Mammary epithelial cell (primary cell): ENCODE measurements at regions of chr5 and their contacts with region 1.

Region 1: DNA sequence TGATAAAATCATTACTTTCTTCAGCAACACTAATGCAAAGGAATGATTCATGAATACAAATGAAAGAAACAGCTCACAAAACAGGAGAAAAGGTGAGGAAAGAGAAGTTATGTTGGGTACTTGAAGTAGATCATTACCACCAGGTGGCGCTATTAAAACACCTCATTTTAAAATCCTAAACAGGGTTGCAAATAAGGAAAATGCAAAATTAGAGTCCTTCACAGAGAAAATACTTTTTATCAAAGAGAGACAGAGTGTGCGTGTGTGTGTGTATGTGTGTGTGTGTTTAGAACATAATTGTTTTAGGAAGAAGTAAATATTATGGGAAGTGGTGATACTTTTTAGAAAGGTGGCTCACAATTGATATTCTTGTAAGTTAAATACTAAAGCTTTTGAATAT is 49.5 kb upstream of the CD180 start:
- DNase-seq: peak; percentile 66
- H3K4me3 ChIP-seq: no peak overlapping the region
- H3K27ac ChIP-seq: peak overlapping the region; percentile 30
- H3K4me1 ChIP-seq: peaks cover 46% of the 10 kb centered on the region
- H3K27me3 ChIP-seq: no peaks in the 10 kb centered on the region
- CTCF ChIP-seq: peak; percentile 50 to 61

Region 2: DNA sequence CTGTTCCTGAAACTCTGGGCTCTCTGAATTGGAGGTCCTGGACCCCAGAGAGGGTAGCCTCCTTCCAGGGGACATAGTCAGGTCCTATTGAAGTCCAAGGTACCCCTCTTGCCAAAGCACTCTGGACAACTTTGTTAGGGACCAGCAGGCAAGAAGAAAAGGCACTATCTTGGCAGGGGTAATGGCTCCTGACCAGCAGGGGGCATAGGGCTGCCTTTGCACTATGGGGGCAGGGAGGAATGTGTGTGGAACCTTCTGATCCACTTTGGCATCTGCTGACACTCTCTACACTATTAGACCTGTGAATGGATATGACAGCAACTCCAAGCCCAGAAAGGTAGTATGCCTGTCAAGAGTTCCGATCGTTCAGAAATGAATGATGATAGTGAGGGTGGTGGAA is 129.5 kb after region 1 on chr5:
- CTCF ChIA-PET with region 1: no interaction called
- dilution Hi-C with region 1: no loop called
- in situ Hi-C with region 1: no loop called
- intact Hi-C with region 1: no loop called
- DNase-seq: no peak
- H3K4me3 ChIP-seq: no peak overlapping the region
- H3K27ac ChIP-seq: no peak overlapping the region
- H3K4me1 ChIP-seq: no peaks in the 10 kb centered on the region
- H3K27me3 ChIP-seq: no peaks in the 10 kb centered on the region
- CTCF ChIP-seq: peak in 1 of 2 donors; percentile 17

Region 3: GRCh38 chr5:67395790-67396418 is 149.8 kb after region 1 on chr5:
- CTCF ChIA-PET with region 1: interaction called, 3 read pairs
- dilution Hi-C with region 1: no loop called
- in situ Hi-C with region 1: no loop called
- intact Hi-C with region 1: loop called (anchors 1 kb)
- DNase-seq: no peak
- H3K4me3 ChIP-seq: no peak overlapping the region
- H3K27ac ChIP-seq: no peak overlapping the region
- H3K4me1 ChIP-seq: no peaks in the 10 kb centered on the region
- H3K27me3 ChIP-seq: no peaks in the 10 kb centered on the region
- CTCF ChIP-seq: no peak

Region 4: DNA sequence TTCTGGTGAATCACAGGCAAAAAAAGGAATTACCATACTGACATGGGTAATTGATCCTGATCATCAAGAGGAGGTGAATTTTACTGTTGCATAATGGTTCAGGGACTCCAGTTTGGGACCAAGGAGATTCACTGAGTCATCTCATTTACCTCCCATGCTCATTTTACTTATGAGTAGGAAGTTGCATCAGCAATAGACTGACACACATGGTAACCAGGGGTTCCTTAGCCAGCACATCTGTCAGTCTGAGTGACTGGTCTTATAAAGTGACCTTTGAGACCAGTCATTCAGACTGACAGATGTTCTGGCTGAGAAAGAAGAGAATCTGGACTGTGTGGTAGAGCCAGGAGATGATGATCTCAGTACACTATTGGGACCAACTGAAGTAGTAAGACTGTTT is 335.1 kb after region 1 on chr5:
- CTCF ChIA-PET with region 1: no interaction called
- dilution Hi-C with region 1: no loop called
- in situ Hi-C with region 1: no loop called
- intact Hi-C with region 1: loop called (anchors 5 kb)
- DNase-seq: peak; percentile 79
- H3K4me3 ChIP-seq: no peak overlapping the region
- H3K27ac ChIP-seq: no peak overlapping the region
- H3K4me1 ChIP-seq: peaks cover 7% of the 10 kb centered on the region
- H3K27me3 ChIP-seq: no peaks in the 10 kb centered on the region
- CTCF ChIP-seq: no peak

Region 5: DNA sequence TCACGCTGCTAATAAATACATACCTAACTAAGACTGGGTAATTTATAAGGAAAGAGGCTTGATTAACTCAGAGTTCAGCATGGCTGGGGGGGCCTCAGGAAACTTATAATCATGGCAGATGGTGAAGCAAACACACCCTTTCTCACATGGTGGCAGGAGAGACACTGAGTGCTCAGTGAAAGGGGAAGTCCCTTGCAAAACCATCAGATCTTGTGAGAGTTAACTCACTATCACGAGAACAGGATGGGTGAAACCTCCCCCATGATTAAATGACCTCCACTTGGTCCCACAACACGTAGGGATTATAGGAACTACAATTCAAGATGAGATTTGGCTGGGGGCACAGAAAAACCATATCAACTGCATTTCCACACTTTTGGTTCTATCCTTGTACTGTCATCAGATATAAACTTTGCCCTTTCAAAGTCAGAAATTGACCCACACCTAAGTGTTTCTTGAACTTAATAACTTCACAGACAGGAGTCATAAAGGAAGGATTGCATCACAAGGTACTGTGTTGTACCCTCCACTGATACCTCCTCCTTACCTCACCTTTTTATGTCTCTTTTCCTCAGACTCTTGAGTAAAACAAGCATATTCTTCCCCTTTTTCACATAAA is 650.3 kb after region 1 on chr5:
- CTCF ChIA-PET with region 1: no interaction called
- dilution Hi-C with region 1: no loop called
- in situ Hi-C with region 1: no loop called
- intact Hi-C with region 1: loop called (anchors 5 kb)
- DNase-seq: no peak
- H3K4me3 ChIP-seq: no peak overlapping the region
- H3K27ac ChIP-seq: peak overlapping the region; percentile 79
- H3K4me1 ChIP-seq: peaks cover 26% of the 10 kb centered on the region
- H3K27me3 ChIP-seq: no peaks in the 10 kb centered on the region
- CTCF ChIP-seq: no peak

Region 6: DNA sequence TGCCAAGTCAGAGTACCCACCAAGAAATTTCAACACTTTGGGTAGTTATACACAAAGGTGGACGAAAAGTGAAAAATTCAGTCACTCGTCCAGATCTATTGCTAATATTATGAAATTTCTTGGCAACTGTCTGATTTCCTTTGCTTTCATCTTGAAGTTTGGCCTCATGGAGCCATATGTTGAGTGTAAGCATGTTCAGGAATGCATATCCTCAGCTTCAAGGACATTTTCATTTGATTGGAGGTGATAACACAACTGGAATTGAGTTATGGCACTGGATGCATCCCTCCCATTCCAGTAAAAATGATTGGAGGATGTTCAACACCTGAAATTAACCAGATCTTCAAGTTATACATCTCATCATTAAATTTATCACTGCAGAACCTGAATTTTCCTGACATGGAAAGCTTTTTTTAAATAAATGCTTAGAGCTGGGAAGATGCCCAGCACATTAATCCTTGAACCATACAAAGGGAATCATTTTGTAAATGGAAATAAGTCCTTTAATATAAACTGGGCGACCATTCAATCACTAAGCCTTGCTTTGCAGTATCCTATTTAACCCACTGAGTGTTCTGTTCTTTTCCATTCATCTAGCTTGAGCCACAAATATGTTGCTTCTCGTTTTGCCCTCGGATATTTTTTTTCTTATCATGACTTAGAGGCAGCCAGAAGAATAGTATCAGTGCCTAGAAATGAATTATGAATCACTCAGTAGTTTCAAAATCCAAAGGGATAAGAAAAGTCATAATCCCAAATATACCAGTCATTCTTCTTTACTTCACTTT is 695.7 kb after region 1 on chr5:
- CTCF ChIA-PET with region 1: no interaction called
- dilution Hi-C with region 1: no loop called
- in situ Hi-C with region 1: no loop called
- intact Hi-C with region 1: no loop called
- DNase-seq: peak; percentile 32
- H3K4me3 ChIP-seq: peak overlapping the region in 1 of 3 experiments; percentile 8
- H3K27ac ChIP-seq: no peak overlapping the region
- H3K4me1 ChIP-seq: peaks cover 9% of the 10 kb centered on the region
- H3K27me3 ChIP-seq: no peaks in the 10 kb centered on the region
- CTCF ChIP-seq: no peak

Region 7: GRCh38 chr5:68215208-68215897 is 969.2 kb after region 1 on chr5 and contains the start of gene PIK3R1:
- CTCF ChIA-PET with region 1: no interaction called
- dilution Hi-C with region 1: no loop called
- in situ Hi-C with region 1: no loop called
- intact Hi-C with region 1: loop called (anchors 1 kb)
- DNase-seq: peak; percentile 96
- H3K4me3 ChIP-seq: peak within 1 kb of the TSS; percentile 88 to 97 (median 91)
- H3K27ac ChIP-seq: peak within 1 kb of the TSS; percentile 77
- H3K4me1 ChIP-seq: peaks cover 20% of the 10 kb centered on the region
- H3K27me3 ChIP-seq: no peaks in the 10 kb centered on the region
- CTCF ChIP-seq: peak; percentile 22 to 42
- total RNA-seq, gene PIK3R1: 74.3 to 195 TPM

Region 8: DNA sequence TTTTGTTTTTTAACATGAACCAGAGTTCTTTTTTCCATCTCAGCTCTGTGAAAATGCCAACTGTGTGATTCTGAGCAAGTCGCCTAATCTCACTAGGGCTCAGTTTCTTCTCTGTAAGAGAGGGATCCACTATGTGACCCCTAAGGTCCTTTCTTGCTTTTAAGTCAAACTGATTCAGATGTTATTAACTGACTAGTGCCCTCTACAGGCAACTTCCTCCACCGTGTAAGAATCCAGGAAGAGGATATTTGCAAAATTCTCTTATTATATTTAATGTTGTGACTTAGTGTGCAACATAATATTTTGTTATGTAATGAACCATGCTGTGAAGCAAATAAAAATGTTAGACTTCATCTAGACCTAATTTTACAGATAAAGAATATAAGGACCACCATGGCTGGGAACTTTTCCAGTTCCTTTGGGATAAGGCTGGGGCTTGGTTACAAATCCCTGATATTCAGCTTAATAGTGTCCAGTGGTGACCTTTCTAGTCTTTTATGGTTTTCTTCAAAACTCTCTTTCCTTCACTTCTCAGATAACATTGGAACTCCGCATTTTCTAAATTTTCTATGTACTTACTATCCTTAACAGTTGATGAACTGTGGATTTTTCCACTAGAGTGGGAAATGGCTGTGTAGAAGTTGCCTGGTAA is 1214.2 kb after region 1 on chr5:
- CTCF ChIA-PET with region 1: no interaction called
- dilution Hi-C with region 1: no loop called
- in situ Hi-C with region 1: no loop called
- intact Hi-C with region 1: loop called (anchors 5 kb)
- DNase-seq: peak; percentile 40
- H3K4me3 ChIP-seq: no peak overlapping the region
- H3K27ac ChIP-seq: no peak overlapping the region
- H3K4me1 ChIP-seq: peaks cover 19% of the 10 kb centered on the region
- H3K27me3 ChIP-seq: no peaks in the 10 kb centered on the region
- CTCF ChIP-seq: peak; percentile 68 to 74